MCF 10A (cell line): ENCODE measurements at regions of chr2 and their contacts with region 1.

Region 1: GRCh38 chr2:229342376-229342775 is 71.3 kb upstream of the PID1 start:
- DNase-seq: peak; percentile 74
- H3K4me3 Mint-ChIP-seq: no peak overlapping the region
- H3K27ac Mint-ChIP-seq: no peak overlapping the region
- H3K4me1 Mint-ChIP-seq: peaks cover 33% of the 10 kb centered on the region
- H3K27me3 Mint-ChIP-seq: no peaks in the 10 kb centered on the region
- CTCF ChIP-seq: no peak

Region 2: GRCh38 chr2:229057976-229058553 is 284.3 kb before region 1 on chr2:
- CTCF ChIA-PET with region 1: no interaction called
- POLR2A ChIA-PET with region 1: no interaction called
- intact Hi-C with region 1: no loop called
- DNase-seq: no peak
- H3K4me3 Mint-ChIP-seq: no peak overlapping the region
- H3K27ac Mint-ChIP-seq: no peak overlapping the region
- H3K4me1 Mint-ChIP-seq: peaks cover 9% of the 10 kb centered on the region
- H3K27me3 Mint-ChIP-seq: no peaks in the 10 kb centered on the region
- CTCF ChIP-seq: no peak

Region 3: DNA sequence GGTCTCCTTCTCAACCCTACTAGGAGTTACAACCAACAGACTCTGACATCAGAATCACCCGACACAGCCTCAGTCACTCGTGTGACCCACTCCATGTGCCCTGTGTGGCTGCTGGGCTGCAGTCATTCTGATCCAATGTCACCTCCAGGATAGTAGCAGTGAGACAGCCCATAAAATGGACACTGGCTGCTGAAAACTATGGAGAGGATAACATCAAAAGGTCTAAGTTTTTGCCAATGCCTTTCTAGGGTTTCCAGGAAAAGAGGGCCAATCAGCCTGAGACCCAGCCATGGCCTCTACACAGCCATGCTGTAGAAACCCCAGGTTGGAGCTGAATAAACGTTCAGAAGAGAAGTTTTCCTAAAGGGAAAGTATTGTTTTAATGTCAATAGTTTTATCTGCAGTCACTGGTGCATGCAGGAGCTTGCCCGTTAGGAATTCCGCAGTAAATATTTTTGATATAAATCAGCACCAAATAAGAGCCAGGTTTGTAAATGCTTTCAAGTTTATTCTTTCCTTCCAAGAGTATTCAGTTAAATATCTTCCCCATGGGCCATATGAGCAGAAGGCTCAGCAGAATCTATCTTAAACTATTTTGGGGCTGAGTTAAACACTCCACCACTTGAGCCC is 20.9 kb after region 1 on chr2:
- CTCF ChIA-PET with region 1: interaction called, 6 read pairs
- POLR2A ChIA-PET with region 1: interaction called, 10 read pairs
- intact Hi-C with region 1: no loop called
- DNase-seq: peak; percentile 33
- H3K4me3 Mint-ChIP-seq: peak overlapping the region; percentile 26
- H3K27ac Mint-ChIP-seq: peak overlapping the region; percentile 91
- H3K4me1 Mint-ChIP-seq: peaks cover 14% of the 10 kb centered on the region
- H3K27me3 Mint-ChIP-seq: no peaks in the 10 kb centered on the region
- CTCF ChIP-seq: no peak